Dendritic cell treated with granulocyte-macrophage colony-stimulating factor and Interleukin-4, amounts not matched to agents 40 ng/mL and 50 ng/mL, for 4 days (primary cell): ENCODE measurements at regions of chr19 and their contacts with region 1.

Region 1: GRCh38 chr19:5904352-5905113 is at the start of gene VMAC:
- H3K4me3 Mint-ChIP-seq: peak within 1 kb of the TSS; percentile 95
- H3K27ac Mint-ChIP-seq: peak within 1 kb of the TSS; percentile 98
- H3K4me1 Mint-ChIP-seq: peaks cover 35% of the 10 kb centered on the region
- H3K27me3 Mint-ChIP-seq: no peaks in the 10 kb centered on the region

Region 2: DNA sequence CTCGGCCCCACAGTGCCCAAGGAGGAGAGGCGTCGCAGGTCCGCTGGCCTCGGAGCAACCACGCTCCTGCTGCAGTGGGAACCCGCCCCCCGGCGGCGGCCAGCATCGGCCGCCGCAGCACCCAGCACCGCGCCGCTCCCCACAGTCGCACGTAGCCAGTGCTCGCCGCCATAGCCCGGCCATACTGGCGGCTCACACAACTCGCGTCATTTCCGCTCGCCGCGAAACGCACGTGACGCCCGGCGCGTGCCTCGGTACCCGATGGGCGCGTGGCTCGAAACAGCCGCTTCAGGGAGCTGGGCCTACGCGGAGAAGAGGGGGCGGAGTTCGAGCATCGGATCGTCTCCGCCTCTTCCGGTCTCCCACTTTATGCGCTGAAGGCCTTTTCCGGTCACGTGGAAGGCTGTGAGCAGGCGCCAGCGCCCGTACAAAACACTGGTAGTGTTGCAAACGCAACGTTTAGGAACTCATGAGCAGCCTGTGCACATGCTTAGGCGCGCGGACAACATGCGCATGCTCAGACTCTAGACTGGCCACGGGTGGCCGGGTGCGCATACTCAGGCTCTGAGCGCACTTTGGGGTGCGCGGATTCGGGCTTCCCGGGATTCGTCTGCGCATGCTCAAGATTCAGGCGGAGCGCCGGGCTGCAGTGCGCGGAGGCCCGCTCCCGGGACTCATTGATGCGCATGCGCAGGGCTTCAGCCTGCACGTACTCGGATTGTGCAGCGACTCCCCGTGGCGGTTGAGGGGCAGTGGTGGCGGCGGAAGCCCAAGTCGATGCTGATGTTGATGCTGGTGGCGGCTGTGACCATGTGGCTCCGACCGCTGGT is 184.4 kb before region 1 on chr19 and contains the starts of genes CATSPERD and LONP1:
- intact Hi-C with region 1: loop called (anchors 2 kb)
- H3K4me3 Mint-ChIP-seq: peak within 1 kb of the TSS; percentile 85
- H3K27ac Mint-ChIP-seq: peak within 1 kb of the TSS; percentile 93
- H3K4me1 Mint-ChIP-seq: peaks cover 29% of the 10 kb centered on the region
- H3K27me3 Mint-ChIP-seq: peaks cover 2% of the 10 kb centered on the region

Region 3: GRCh38 chr19:5827891-5828660 is 76.5 kb before region 1 on chr19:
- intact Hi-C with region 1: loop called (anchors 2 kb)
- H3K4me3 Mint-ChIP-seq: peak overlapping the region; percentile 95
- H3K27ac Mint-ChIP-seq: peak overlapping the region; percentile 91
- H3K4me1 Mint-ChIP-seq: peaks cover 28% of the 10 kb centered on the region
- H3K27me3 Mint-ChIP-seq: peaks cover 35% of the 10 kb centered on the region

Region 4: DNA sequence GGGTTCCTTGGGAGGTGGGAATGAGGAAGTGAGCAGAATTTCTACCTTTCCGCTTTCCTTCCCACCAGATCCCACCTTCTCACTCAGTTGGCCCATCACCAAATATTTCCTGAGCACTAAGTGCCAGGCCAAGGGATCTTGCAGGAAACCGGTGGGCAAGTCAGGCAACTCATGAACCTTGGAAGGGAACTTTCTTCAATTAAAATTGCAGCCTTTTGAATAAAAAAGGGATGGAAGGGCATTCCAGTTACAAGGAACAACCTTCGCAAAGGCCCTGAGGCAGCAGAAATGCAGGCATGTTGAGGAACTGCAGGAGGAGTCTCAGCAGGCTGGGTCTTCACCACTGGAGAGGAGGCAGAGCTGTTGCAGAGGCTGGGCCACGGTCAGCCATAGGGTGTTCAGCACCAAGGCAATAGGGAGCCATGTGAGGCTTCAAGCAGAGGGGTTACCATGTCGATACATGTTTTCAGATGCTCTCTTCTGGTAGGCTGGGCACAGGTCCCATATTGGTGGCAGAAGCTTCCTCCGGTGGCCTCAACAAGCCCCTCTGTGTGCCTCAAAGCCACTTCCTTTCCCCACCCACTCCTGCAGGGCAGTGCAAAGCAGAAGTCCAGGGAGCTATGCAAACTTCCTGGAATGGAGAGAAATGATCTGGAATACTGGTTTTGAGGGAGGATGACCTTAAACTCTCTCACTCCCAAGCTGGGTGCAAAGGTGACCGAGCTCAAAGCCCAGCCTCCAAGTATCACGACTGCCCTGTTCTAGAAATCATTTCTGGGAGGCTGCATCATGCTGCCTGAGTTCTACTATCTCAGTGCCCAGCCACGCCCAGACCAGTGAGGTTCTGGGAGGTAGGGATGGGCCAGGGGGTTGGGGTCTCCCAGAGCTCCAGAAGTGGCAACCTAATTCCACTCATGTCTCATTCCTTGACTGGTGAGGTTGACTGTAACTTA is 65.2 kb before region 1 on chr19 and contains the start of gene FUT6:
- intact Hi-C with region 1: no loop called
- H3K4me3 Mint-ChIP-seq: no peak within 1 kb of the TSS
- H3K27ac Mint-ChIP-seq: peak within 1 kb of the TSS; percentile 48
- H3K4me1 Mint-ChIP-seq: peaks cover 21% of the 10 kb centered on the region
- H3K27me3 Mint-ChIP-seq: peaks cover 11% of the 10 kb centered on the region

Region 5: GRCh38 chr19:5977785-5978605 is 73.5 kb after region 1 on chr19 and contains the start of gene RANBP3:
- intact Hi-C with region 1: loop called (anchors 1 kb)
- H3K4me3 Mint-ChIP-seq: peak within 1 kb of the TSS; percentile 82
- H3K27ac Mint-ChIP-seq: peak within 1 kb of the TSS; percentile 86
- H3K4me1 Mint-ChIP-seq: peaks cover 53% of the 10 kb centered on the region
- H3K27me3 Mint-ChIP-seq: no peaks in the 10 kb centered on the region

Region 6: DNA sequence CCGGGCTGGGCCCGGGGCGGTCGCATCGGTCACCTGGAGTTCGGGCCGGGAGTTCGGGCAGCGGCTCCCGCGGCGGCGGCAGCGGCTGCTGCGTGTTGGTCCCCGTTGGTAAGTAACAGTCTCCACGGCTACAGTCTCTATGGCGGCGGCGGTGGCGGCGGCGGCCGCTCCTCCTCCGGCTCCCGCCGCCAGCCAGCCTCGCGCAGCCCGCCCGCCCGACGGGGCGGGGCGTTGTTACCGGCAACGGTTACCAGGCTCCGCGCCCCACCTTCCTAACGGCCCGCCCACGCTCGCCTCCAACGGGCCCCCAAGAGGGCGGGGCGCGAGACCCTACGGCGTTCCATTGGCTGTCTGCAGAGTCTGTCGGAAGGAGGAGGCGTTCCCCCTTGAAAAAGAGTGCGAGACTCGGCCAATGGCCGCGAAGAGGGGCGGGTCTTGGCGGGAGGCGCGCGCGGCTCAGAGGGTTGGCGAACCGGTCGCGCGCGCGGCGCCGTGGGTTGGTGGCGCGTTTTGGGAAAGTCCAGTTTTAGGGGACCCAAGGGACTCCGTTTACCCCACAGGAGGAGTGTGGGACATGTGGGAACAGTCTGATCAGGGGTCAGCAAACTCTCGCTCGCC is 205.9 kb after region 1 on chr19 and contains the start of gene RFX2:
- intact Hi-C with region 1: loop called (anchors 5 kb)
- H3K4me3 Mint-ChIP-seq: peak within 1 kb of the TSS; percentile 93
- H3K27ac Mint-ChIP-seq: peak within 1 kb of the TSS; percentile 94
- H3K4me1 Mint-ChIP-seq: peaks cover 49% of the 10 kb centered on the region
- H3K27me3 Mint-ChIP-seq: peaks cover 7% of the 10 kb centered on the region